ENCODE measurements at regions of chr1 and their contacts with region 1.

Region 1: GRCh38 chr1:225881969-225882693 is at the start of gene TMEM63A:
- DNase-seq: peak; percentile 69 to 94 (median 86)
- ATAC-seq: peak; percentile 71 to 77 (median 74)
- H3K4me3 ChIP-seq: peak within 1 kb of the TSS; percentile 86 to 100
- H3K4me3 Mint-ChIP-seq: peak within 1 kb of the TSS; percentile 87 to 95 (median 91)
- H3K27ac ChIP-seq: peak within 1 kb of the TSS; percentile 80
- H3K27ac Mint-ChIP-seq: peak within 1 kb of the TSS; percentile 94 to 97
- H3K4me1 ChIP-seq: peaks cover 35 to 55% of the 10 kb centered on the region in 2 experiments
- H3K4me1 Mint-ChIP-seq: peaks cover 50% of the 10 kb centered on the region in 3 donors
- H3K27me3 ChIP-seq: no peaks in the 10 kb centered on the region
- H3K27me3 Mint-ChIP-seq: no peaks in the 10 kb centered on the region
- total RNA-seq, gene TMEM63A: 332 to 473 (median 390) TPM

Region 2: DNA sequence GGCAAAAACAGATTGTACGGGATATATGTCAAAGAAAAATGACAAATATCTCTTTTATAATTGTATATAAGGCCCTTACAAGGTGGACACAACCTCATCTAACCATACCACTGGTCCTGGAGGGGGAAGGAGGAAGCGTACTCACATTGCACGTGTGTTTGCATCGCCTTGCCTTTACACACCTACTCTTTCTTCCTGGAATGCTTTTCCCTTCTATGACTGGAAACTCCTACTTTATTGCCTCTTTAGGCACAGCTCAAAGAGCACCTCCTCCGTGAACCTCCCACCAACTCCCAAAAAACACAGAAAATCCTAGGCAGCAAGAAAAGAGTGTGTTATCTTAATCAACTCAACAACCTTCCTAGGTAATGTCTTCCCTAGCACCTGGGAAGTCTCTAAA is 354.6 kb before region 1 on chr1:
- CTCF ChIA-PET with region 1: no interaction called
- POLR2A ChIA-PET with region 1: no interaction called
- DNase-seq: no peak
- ATAC-seq: no peak
- H3K4me3 ChIP-seq: no peak overlapping the region
- H3K4me3 Mint-ChIP-seq: no peak overlapping the region
- H3K27ac ChIP-seq: no peak overlapping the region
- H3K27ac Mint-ChIP-seq: no peak overlapping the region
- H3K4me1 ChIP-seq: no peaks in the 10 kb centered on the region
- H3K4me1 Mint-ChIP-seq: no peaks in the 10 kb centered on the region
- H3K27me3 ChIP-seq: no peaks in the 10 kb centered on the region
- H3K27me3 Mint-ChIP-seq: peaks cover 6 to 12% of the 10 kb centered on the region in 2 donors

Region 3: GRCh38 chr1:225896937-225897549 is 14.9 kb after region 1 on chr1:
- CTCF ChIA-PET with region 1: interaction called, 4 to 11 read pairs
- POLR2A ChIA-PET with region 1: interaction called in 1 of 2 experiments, 12 read pairs
- DNase-seq: peak; percentile 45 to 94 (median 71)
- ATAC-seq: peak; percentile 92 to 96 (median 94)
- H3K4me3 ChIP-seq: peak overlapping the region; percentile 15 to 51
- H3K4me3 Mint-ChIP-seq: peak overlapping the region; percentile 52 to 85 (median 63)
- H3K27ac ChIP-seq: peak overlapping the region; percentile 85
- H3K27ac Mint-ChIP-seq: peak overlapping the region; percentile 95 to 97
- H3K4me1 ChIP-seq: peaks cover 34 to 43% of the 10 kb centered on the region in 2 experiments
- H3K4me1 Mint-ChIP-seq: peaks cover 53 to 66% (median 56%) of the 10 kb centered on the region in 3 donors
- H3K27me3 ChIP-seq: no peaks in the 10 kb centered on the region
- H3K27me3 Mint-ChIP-seq: no peaks in the 10 kb centered on the region

Region 4: DNA sequence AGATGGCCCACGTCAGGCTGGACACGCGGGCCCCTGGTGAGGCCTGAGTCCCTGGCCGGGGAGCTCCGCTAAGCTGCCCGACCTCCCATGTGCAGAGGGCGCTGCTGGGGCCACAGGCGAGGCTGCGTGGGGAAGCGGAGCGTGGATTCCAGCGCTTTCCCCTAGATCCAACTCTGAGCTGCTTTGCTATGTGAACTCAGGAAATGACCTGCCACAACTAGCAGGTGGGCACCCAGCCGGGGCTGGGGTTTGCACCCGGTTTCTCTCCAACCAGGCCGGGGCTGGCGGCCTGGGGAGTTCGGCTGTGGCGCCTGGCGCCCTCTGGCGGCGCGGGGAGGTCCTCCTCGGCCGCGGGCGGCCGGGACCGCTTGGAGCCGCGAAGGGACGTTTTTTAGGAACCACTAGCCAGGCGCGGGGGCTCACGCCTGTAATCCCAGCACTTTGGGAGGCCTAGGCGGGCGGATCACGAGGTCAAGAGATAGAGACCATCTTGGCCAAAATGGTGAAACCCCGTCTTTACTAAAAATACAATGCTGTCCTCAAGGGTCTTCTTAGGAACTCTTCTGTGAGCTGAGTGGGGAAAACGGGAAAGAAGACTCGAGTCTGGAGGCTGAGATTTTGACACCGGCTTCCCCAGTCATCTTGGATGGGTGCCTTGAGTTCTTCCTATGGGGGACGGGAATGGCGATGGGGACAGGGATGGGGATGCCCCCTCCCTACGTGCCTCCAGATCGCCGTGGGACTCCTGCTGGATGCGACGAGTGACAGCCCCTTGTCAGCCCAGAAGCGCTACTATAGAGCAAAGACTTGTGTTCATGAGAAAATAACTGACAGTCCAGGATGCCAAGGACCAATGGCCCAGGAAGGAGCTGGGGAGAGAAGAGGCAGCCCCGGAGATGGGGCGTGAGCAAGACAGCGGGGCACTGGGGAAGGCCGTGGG is 29.3 kb after region 1 on chr1:
- CTCF ChIA-PET with region 1: interaction called, 6 to 10 read pairs
- POLR2A ChIA-PET with region 1: interaction called, 3 to 5 read pairs
- DNase-seq: peak; percentile 25 to 86 (median 67)
- ATAC-seq: peak; percentile 77 to 96 (median 89)
- H3K4me3 ChIP-seq: peak overlapping the region in 1 of 2 donors; percentile 10
- H3K4me3 Mint-ChIP-seq: peak overlapping the region in 1 of 3 donors; percentile 29
- H3K27ac ChIP-seq: no peak overlapping the region
- H3K27ac Mint-ChIP-seq: peak overlapping the region in 1 of 2 donors; percentile 66
- H3K4me1 ChIP-seq: peaks cover 17 to 27% of the 10 kb centered on the region in 2 experiments
- H3K4me1 Mint-ChIP-seq: peaks cover 31 to 35% (median 35%) of the 10 kb centered on the region in 3 donors
- H3K27me3 ChIP-seq: no peaks in the 10 kb centered on the region
- H3K27me3 Mint-ChIP-seq: no peaks in the 10 kb centered on the region

Region 5: GRCh38 chr1:225944951-225945350 is 62.8 kb after region 1 on chr1:
- CTCF ChIA-PET with region 1: no interaction called
- POLR2A ChIA-PET with region 1: no interaction called
- DNase-seq: no peak
- ATAC-seq: peak; percentile 45 to 83 (median 66)
- H3K4me3 ChIP-seq: no peak overlapping the region
- H3K4me3 Mint-ChIP-seq: peak overlapping the region in 1 of 3 donors; percentile 56
- H3K27ac ChIP-seq: no peak overlapping the region
- H3K27ac Mint-ChIP-seq: no peak overlapping the region
- H3K4me1 ChIP-seq: peaks cover 2 to 13% of the 10 kb centered on the region in 2 experiments
- H3K4me1 Mint-ChIP-seq: peaks cover 10 to 18% (median 11%) of the 10 kb centered on the region in 3 donors
- H3K27me3 ChIP-seq: peaks cover 0 to 10% of the 10 kb centered on the region in 2 experiments
- H3K27me3 Mint-ChIP-seq: peaks cover 0 to 8% of the 10 kb centered on the region in 2 donors

Measured in T-cell (primary cell).